ENCODE measurements at regions of chr16 and their contacts with region 1.

Region 1: DNA sequence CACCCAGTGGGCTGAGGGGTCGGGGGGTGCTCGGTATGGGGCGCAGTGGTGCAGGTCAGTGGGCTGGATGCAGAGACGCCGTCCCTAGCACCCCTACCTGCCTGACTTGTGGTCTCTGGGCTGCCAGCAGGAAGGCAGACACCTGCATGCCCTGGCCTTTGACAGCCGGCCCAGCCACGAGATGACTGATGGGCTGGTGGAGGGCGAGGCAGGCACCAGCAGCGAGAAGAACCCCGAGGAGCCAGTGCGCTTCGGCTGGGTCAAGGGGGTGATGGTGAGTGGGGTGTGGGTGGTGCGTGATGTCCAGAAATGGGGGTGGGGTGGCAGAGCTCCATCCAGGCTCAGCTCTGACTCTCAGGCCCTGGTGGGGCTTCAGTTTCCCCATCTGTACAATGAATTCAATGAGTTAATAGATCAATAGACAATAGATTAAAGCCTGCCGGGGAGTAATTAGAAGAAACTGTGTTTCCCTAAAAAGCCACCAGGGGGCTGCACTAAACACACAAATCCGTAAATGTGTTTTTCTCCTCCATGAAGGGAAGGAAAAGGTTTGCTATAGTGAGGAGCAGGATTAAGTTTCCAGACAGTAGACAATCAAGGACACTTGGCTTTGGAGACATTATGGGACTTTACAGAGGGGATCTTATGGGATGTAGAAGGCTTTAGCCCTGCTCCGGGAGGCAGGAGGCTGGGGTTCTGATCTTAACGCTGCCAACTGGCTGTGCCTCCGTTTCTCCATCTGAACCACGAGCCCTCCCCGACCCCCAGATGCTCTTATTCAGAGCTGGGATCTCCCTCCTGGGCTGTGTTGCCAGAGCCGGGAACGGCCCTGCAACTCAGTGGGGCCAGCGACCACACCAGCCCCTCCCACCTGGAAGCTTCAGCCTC is 2.2 kb downstream of the SLC12A3 start:
- DNase-seq: no peak
- ATAC-seq: peak; percentile 27
- H3K4me3 ChIP-seq: no peak overlapping the region
- H3K27ac ChIP-seq: no peak overlapping the region
- H3K4me1 ChIP-seq: peaks cover 35% of the 10 kb centered on the region
- H3K27me3 ChIP-seq: no peaks in the 10 kb centered on the region
- CTCF ChIP-seq: peak; percentile 65 to 75 (median 65)
- EP300 ChIP-seq: no peak
- POLR2A ChIP-seq: no peak
- RAD21 ChIP-seq: peak; percentile 88

Region 2: GRCh38 chr16:56888806-56889205 is 21.6 kb after region 1 on chr16:
- CTCF ChIA-PET with region 1: interaction called, 18 read pairs
- POLR2A ChIA-PET with region 1: interaction called, 3 read pairs
- RAD21 ChIA-PET with region 1: interaction called, 4 read pairs
- SMC1A ChIA-PET with region 1: interaction called, 15 read pairs
- in situ Hi-C with region 1: no loop called
- intact Hi-C with region 1: loop called (anchors 2 kb)
- DNase-seq: peak; percentile 61
- ATAC-seq: peak; percentile 94
- H3K4me3 ChIP-seq: no peak overlapping the region
- H3K27ac ChIP-seq: no peak overlapping the region
- H3K4me1 ChIP-seq: peaks cover 8% of the 10 kb centered on the region
- H3K27me3 ChIP-seq: no peaks in the 10 kb centered on the region
- CTCF ChIP-seq: peak in 2 of 3 experiments; percentile 15 to 27; a peak in 2 of 6 replicates
- EP300 ChIP-seq: peak in 1 of 2 experiments; percentile 57; a peak in 1 of 4 replicates
- POLR2A ChIP-seq: no peak
- RAD21 ChIP-seq: 0 out of 2 replicates have a peak, but pooled peaks have one; percentile 37

Region 3: GRCh38 chr16:56911771-56912571 is 44.8 kb after region 1 on chr16:
- CTCF ChIA-PET with region 1: interaction called, 50 read pairs
- POLR2A ChIA-PET with region 1: interaction called, 7 read pairs
- RAD21 ChIA-PET with region 1: interaction called, 19 read pairs
- SMC1A ChIA-PET with region 1: interaction called, 4 read pairs
- in situ Hi-C with region 1: no loop called
- intact Hi-C with region 1: loop called (anchors 2 kb)
- DNase-seq: peak; percentile 72
- ATAC-seq: peak; percentile 81
- H3K4me3 ChIP-seq: no peak overlapping the region; the same call in 1 of the 2 replicates
- H3K27ac ChIP-seq: peak overlapping the region; percentile 34
- H3K4me1 ChIP-seq: peaks cover 46% of the 10 kb centered on the region
- H3K27me3 ChIP-seq: no peaks in the 10 kb centered on the region
- CTCF ChIP-seq: no peak
- EP300 ChIP-seq: peak; percentile 100; a peak in 3 of 4 replicates
- POLR2A ChIP-seq: no peak
- RAD21 ChIP-seq: 0 out of 2 replicates have a peak, but pooled peaks have one; percentile 0

Region 4: DNA sequence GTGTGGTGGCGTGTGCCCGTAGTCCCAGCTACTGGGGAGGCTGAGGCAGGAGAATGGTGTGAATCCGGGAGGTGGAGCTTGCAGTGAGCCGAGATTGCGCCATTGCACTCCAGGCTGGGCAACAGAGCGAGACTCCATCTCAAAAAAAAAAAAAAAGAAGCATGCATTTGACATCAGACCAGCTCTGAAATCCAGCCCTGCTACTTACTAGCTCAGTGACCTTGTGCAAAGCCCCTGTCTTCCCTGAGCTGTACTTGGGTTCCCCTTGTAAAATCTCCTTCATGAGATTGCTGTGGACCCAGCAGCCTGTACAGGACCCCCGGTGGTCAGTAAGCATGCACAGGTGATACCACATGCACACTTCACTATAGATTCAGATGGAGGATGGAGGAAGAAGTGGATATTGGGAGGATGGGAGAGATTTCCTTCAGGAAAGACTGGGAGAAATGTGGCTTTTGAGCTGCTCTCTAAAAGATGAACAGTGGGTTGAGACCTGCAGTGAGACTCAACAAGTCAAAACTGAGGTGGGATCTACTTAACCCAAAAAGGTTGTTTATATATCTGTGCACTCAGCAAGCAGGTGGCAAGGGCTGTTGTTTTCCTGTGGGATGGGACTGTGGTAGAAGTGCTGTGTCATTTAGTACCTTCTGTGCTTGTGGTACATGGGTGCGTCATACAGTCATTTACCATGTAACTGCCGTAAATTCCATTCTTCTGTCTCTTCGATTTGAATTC is 71.4 kb after region 1 on chr16:
- CTCF ChIA-PET with region 1: interaction called, 45 read pairs
- POLR2A ChIA-PET with region 1: interaction called, 11 read pairs
- RAD21 ChIA-PET with region 1: interaction called, 10 read pairs
- SMC1A ChIA-PET with region 1: interaction called, 28 read pairs
- in situ Hi-C with region 1: no loop called
- intact Hi-C with region 1: loop called (anchors 2 kb)
- DNase-seq: no peak
- ATAC-seq: peak; percentile 45
- H3K4me3 ChIP-seq: peak overlapping the region; percentile 24
- H3K27ac ChIP-seq: peak overlapping the region; percentile 5
- H3K4me1 ChIP-seq: peaks cover 56% of the 10 kb centered on the region
- H3K27me3 ChIP-seq: no peaks in the 10 kb centered on the region
- CTCF ChIP-seq: no peak
- EP300 ChIP-seq: peak; percentile 35 to 55; a peak in 2 of 4 replicates
- POLR2A ChIP-seq: peak; percentile 56
- RAD21 ChIP-seq: no peak

Region 5: GRCh38 chr16:56950881-56951771 is 83.9 kb after region 1 on chr16:
- CTCF ChIA-PET with region 1: interaction called, 247 read pairs
- POLR2A ChIA-PET with region 1: interaction called, 11 read pairs
- RAD21 ChIA-PET with region 1: interaction called, 126 read pairs
- SMC1A ChIA-PET with region 1: interaction called, 86 read pairs
- in situ Hi-C with region 1: loop called (anchors 5 kb)
- intact Hi-C with region 1: loop called (anchors 1 kb)
- DNase-seq: no peak
- ATAC-seq: peak; percentile 86
- H3K4me3 ChIP-seq: no peak overlapping the region
- H3K27ac ChIP-seq: no peak overlapping the region
- H3K4me1 ChIP-seq: peaks cover 18% of the 10 kb centered on the region
- H3K27me3 ChIP-seq: no peaks in the 10 kb centered on the region
- CTCF ChIP-seq: peak; percentile 71 to 90 (median 89)
- EP300 ChIP-seq: 0 out of 4 replicates have a peak, but pooled peaks of 1 of the 2 experiments have one; percentile 64
- POLR2A ChIP-seq: no peak
- RAD21 ChIP-seq: peak; percentile 83